HEK293T (cell line): ENCODE measurements at regions of chr1 and their contacts with region 1.

Region 1: DNA sequence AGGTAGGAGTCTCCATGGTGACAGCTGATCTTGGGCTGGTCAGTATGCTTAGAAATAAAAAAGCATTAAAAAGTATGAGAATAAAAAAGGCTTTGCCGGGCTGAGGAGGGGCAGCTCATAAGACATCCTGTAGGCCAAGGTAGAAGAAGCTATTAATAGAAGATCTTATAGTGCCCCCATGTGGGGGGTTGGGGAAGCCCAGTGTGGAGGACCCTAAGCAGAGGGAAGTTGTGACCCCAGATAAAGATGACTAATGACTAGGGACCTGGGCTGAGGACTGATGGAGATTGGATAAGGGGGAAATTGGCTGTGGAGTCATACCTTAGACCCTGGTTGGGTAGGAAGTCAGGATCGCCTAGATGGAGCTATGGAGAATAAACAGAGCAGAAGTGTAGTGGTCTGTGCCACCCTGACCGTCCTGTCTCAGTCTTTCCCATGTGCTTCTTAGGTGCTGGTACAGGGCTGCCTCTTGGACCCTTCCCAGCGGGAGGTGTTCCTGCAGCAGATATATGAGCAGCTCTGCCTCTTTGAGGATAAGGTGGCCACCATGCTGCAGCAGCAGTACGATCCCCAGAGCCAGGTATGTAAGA is 25.0 kb downstream of the SZT2 start:
- DNase-seq: peak; percentile 70

Region 2: DNA sequence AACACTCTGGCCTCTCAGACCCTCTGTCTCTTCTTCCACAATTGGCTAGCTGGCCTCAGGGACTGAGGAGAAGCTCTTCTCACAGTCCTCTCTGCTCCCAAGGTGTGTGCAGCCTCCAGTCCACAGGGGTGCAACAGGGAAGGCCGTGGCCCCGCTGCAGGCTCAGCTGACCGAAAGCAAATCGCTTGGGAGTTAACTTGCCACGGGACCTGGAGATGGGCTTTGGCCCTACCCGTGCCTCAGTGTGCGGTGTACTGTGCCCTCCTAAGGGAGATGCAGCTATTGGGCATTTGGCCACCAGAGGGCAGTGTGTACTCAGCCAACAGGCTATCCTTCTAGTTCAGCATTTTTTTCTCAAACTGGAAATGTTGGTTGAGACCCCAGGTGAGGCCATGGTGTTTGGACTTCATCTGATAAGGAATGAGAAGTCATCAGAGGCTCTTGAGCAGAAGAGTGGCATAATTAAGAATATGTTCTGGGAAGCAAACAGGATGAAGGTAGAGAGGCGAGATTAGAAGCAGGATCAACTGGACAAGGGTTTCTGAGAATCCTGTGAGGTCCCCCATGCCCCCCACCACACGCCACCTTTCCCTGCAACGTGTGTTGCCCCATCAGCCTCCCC is 187.5 kb before region 1 on chr1:
- CTCF ChIA-PET with region 1: interaction called, 19 read pairs
- POLR2A ChIA-PET with region 1: interaction called, 7 read pairs
- DNase-seq: peak; percentile 82

Region 3: GRCh38 chr1:43238085-43238484 is 176.6 kb before region 1 on chr1:
- CTCF ChIA-PET with region 1: interaction called, 12 read pairs
- POLR2A ChIA-PET with region 1: interaction called, 6 read pairs
- DNase-seq: peak; percentile 64

Region 4: DNA sequence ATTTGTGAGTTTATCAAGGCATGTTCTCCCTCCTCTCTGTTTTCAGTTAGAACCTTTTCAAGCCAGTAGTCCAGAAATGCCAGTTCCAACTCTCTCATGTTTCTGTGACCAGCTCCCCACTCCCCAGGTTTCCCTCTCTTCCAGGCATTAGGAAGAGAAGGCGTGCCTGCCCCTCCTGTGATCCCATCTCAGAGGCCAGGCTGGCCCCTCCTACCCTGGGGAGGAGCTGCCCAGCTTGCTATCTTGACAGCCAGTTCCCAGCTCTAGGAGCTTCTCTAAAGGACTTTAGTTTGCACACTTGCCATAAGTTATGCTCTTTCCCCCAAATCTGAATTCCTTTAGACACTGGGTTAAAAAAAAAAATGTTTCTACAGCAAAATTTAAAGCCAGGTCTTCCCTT is 30.1 kb after region 1 on chr1:
- CTCF ChIA-PET with region 1: no interaction called
- POLR2A ChIA-PET with region 1: no interaction called
- DNase-seq: no peak

Region 5: DNA sequence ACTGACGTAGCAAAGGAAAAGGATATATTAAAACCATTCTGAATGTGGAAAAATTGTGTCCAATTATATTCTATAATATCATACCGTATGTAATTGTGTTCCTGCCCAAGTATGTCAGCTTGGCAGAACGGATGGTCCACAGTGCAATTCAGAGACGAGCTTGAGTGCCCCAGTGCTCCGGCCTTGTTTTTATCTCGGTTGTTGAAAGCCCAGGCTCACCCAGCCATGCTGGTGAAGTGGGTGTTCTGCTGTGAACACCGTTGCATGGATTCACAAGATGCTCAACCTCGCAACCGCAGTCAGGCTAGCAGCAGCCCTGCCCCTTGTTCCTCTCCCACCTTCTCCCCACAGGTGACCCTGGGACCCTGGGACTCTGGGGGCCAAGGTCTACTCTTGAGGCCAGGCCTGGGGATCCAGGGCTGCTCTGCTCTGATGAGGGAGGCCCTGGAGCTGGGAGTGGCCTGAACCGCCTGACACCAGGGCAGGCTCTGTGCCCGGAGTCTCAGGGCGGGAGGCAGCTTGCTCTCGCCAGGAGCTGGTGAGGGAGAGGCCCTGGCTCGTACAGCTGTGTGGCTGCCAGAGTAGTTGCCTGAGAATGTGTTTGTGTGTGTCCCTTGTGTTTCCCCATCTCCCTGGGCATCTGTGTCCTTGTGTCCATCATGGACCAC is 127.1 kb after region 1 on chr1:
- CTCF ChIA-PET with region 1: no interaction called
- POLR2A ChIA-PET with region 1: no interaction called
- DNase-seq: no peak